ENCODE measurements at regions of chr11 and their contacts with region 1.

Region 1: GRCh38 chr11:66022401-66023185 is 3.7 kb downstream of the CATSPER1 start:
- H3K4me3 ChIP-seq: no peak overlapping the region
- H3K27ac ChIP-seq: no peak overlapping the region
- H3K4me1 ChIP-seq: no peaks in the 10 kb centered on the region
- CTCF ChIP-seq: peak; percentile 74

Region 2: DNA sequence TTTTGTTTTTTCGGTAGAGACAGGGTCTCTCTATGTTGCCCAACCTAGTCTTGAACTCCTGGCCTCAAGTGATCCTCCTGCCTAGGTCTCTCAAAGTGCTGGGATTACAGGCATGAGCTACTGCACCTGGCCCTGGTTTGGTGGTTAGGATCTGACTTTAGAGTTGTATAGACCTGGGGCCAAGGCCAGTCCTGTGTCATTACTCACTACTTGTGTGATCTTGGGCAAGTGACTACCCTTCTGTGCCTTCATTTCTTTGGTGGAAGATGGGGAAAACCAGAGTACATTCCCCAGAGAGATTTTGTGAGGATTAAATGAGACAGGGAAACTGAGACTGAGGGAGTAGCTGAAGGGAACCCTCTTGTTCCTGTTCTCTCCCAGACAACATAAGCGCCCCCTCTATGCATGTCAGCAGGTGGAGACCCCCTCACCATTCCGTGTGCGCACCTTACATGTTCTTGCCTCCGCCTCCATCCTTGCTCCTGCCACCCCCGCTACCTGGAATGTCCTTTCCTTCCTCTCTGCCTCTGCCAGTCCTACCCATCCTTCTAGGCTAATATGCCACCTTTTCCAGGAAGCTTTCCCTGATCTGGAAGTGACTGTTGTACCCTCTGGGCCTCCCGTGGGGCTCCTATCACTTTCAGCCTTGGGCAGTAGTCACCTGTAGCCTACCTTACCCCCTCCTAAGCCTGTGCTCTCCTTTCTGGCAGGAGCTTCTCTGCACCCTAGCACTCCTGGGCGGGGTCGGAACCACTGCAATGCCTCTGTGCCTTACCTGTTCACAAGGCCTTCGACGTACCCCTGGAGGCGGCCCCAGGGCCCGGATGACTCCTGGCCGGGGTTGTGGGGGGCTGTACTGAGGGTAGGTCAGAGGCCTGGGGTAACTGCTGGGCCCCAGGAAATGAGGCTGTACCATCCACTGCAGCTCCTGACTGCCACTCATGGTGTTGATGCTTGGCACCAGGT is 126.3 kb before region 1 on chr11:
- CTCF ChIA-PET with region 1: no interaction called
- POLR2A ChIA-PET with region 1: no interaction called
- H3K4me3 ChIP-seq: no peak overlapping the region
- H3K27ac ChIP-seq: no peak overlapping the region
- H3K4me1 ChIP-seq: no peaks in the 10 kb centered on the region
- CTCF ChIP-seq: no peak

Region 3: GRCh38 chr11:65988791-65989592 is 33.6 kb before region 1 on chr11:
- CTCF ChIA-PET with region 1: interaction called, 15 read pairs
- POLR2A ChIA-PET with region 1: no interaction called
- H3K4me3 ChIP-seq: no peak overlapping the region
- H3K27ac ChIP-seq: no peak overlapping the region
- H3K4me1 ChIP-seq: no peaks in the 10 kb centered on the region
- CTCF ChIP-seq: peak; percentile 94

Region 4: DNA sequence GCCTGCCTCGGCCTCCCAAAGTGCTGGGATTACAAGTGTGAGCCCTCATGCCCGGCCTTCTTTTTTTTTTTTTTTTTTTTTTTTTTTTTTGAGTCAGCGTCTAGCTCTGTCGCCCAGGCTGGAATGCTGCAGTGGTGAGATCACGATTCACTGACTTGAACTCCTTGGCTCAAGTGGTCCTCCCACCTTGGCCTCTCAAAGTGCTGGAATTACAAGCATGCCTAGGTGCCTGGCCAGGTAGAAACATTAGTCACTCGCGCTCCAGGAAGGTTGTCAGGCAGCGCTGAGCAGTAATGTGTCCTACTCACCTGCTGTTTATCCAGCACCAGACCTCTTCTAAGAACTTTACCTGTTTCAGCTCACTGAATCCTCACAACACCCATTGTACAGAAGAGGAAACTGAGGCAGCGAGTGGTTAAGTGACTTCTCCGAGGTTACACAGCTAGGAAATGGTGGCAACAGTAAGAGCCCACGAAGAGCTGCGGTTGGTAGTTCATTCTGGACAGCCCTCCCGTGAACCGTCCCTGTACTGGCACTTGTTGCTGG is 11.3 kb before region 1 on chr11:
- CTCF ChIA-PET with region 1: interaction called, 15 read pairs
- POLR2A ChIA-PET with region 1: interaction called, 4 read pairs
- H3K4me3 ChIP-seq: no peak overlapping the region
- H3K27ac ChIP-seq: no peak overlapping the region
- H3K4me1 ChIP-seq: no peaks in the 10 kb centered on the region
- CTCF ChIP-seq: no peak

Region 5: DNA sequence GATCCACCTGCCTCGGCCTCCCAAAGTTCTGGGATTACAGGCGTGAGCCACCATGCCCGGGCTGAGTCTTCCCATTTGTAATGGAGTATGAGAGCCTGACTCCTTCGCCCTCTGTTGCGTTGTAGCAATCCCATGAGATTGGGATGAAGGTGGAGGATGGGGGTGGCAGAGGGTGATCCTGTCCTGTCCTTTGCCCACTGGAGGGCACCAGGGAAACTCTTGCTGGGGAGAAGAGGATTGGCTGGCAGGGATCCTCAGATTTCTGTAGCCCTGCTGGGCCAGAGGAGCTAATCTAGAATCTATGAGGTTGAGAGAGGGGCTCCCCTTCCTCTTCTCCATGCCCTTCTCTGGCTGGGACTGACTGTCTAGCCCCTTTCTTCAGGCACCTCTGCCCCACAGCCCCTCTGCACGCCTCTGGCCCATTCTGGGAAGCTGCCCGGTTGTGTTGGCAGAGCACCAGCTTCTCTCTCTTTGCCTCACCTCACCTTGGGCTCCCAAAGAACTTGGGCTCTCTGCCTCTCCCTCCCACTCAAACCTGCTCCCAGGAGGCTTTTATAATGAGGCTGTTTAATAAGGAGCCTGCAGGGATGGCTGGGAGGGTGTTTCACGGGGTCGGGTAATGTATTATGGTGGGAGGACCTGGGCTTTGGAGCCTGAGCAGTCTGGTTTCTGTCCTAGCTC is 13.2 kb after region 1 on chr11:
- CTCF ChIA-PET with region 1: interaction called, 21 read pairs
- POLR2A ChIA-PET with region 1: no interaction called
- H3K4me3 ChIP-seq: no peak overlapping the region
- H3K27ac ChIP-seq: no peak overlapping the region
- H3K4me1 ChIP-seq: no peaks in the 10 kb centered on the region
- CTCF ChIP-seq: no peak

Region 6: DNA sequence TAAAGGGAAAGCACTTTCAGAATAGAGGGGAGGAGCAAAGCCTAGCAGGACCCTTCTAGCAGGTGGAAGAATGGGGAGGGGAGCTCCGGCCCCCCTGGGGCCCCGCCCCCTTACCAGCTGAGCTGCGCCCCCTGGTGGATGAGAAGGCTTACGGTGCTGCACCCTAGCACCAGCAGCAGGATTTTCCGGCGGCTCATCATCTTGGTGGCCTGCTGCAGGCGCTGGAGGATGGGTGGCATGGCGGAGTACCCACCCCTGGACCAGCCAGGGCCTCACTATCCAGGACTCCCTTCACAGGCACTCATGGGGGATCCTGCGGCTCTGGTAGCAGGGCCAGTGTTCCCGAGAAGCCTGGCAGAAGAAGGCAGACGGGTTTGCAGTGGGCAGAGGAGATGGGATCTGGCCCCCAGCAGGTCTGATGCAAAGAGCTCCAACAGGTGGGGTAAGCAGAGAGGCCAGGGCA is 22.6 kb after region 1 on chr11:
- CTCF ChIA-PET with region 1: interaction called, 49 read pairs
- POLR2A ChIA-PET with region 1: interaction called, 4 read pairs
- H3K4me3 ChIP-seq: no peak overlapping the region
- H3K27ac ChIP-seq: no peak overlapping the region
- H3K4me1 ChIP-seq: no peaks in the 10 kb centered on the region
- CTCF ChIP-seq: peak; percentile 78

Measured in HEK293 (cell line).